ENCODE measurements at regions of chr2 and their contacts with region 1.

Region 1: DNA sequence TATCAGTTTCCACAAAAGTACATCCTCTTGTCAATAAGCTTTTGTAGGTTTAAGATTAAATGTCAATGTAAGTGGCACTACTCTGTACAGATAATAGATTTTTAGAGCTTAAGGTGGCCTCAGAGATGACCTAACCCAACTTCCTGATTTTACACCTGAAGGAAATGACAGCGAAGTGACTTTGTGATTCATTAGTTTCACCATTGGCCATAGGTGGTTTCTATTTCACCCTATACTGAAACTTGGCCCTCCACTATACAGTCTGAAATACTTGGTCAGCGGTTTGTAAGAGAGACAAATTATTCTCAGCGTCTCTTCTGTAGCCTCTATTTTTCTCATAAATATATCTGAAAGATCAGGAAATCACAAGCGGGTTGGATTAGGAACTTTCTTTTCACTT is 330.4 kb upstream of the FAM98A start:
- DNase-seq: no peak
- ATAC-seq: no peak
- H3K4me3 ChIP-seq: no peak overlapping the region
- H3K27ac ChIP-seq: no peak overlapping the region
- H3K4me1 ChIP-seq: no peaks in the 10 kb centered on the region
- H3K27me3 ChIP-seq: no peaks in the 10 kb centered on the region
- CTCF ChIP-seq: no peak
- POLR2A ChIP-seq: no peak

Region 2: GRCh38 chr2:33782395-33783230 is 146.9 kb before region 1 on chr2:
- intact Hi-C with region 1: no loop called
- DNase-seq: no peak
- ATAC-seq: no peak
- H3K4me3 ChIP-seq: no peak overlapping the region
- H3K27ac ChIP-seq: no peak overlapping the region
- H3K4me1 ChIP-seq: no peaks in the 10 kb centered on the region
- H3K27me3 ChIP-seq: no peaks in the 10 kb centered on the region
- CTCF ChIP-seq: peak in 3 of 12 donors; percentile 10 to 33 (median 25)
- POLR2A ChIP-seq: no peak

Region 3: GRCh38 chr2:33822964-33823363 is 106.5 kb before region 1 on chr2:
- intact Hi-C with region 1: no loop called
- DNase-seq: no peak
- ATAC-seq: no peak
- H3K4me3 ChIP-seq: no peak overlapping the region
- H3K27ac ChIP-seq: no peak overlapping the region
- H3K4me1 ChIP-seq: no peaks in the 10 kb centered on the region
- H3K27me3 ChIP-seq: no peaks in the 10 kb centered on the region
- CTCF ChIP-seq: no peak
- POLR2A ChIP-seq: no peak

Region 4: GRCh38 chr2:33897741-33898140 is 31.7 kb before region 1 on chr2:
- intact Hi-C with region 1: loop called in 1 of 10 experiments (anchors 2 kb)
- DNase-seq: no peak
- ATAC-seq: no peak
- H3K4me3 ChIP-seq: no peak overlapping the region
- H3K27ac ChIP-seq: no peak overlapping the region
- H3K4me1 ChIP-seq: peaks cover 0 to 8% (median 0%) of the 10 kb centered on the region in 12 donors
- H3K27me3 ChIP-seq: no peaks in the 10 kb centered on the region
- CTCF ChIP-seq: no peak
- POLR2A ChIP-seq: no peak